Sigmoid colon (tissue), 7 donors: ENCODE measurements at regions of chr20 and their contacts with region 1.

Region 1: DNA sequence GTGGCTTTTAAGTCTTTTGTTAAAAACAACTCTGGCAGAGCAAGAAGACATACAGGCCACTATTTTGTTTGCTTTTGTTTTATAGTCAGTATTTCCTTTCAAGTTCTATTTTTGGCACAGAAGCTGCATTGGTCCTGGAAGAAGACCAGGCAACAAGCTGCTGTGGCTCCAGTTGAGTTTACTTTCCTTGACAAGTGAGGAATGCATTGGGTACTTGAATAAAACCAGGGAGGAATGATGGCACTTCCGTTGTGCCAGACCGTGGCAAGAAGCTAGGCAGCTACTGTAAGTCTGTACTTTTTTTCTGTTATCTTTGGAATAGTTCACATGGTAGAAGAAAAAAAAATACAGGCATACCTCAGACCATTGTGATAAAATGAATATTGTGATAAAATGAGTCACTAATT is 66.3 kb downstream of the NCOA3 start:
- DNase-seq: peak; percentile 72
- H3K4me3 ChIP-seq: no peak overlapping the region
- H3K27ac ChIP-seq: peak overlapping the region; percentile 57 to 82 (median 76)
- H3K4me1 ChIP-seq: peaks cover 0 to 46% (median 35%) of the 10 kb centered on the region in 4 donors
- H3K27me3 ChIP-seq: no peaks in the 10 kb centered on the region
- CTCF ChIP-seq: no peak
- EP300 ChIP-seq: peak in 2 of 4 donors; percentile 60 to 75
- POLR2A ChIP-seq: no peak

Region 2: DNA sequence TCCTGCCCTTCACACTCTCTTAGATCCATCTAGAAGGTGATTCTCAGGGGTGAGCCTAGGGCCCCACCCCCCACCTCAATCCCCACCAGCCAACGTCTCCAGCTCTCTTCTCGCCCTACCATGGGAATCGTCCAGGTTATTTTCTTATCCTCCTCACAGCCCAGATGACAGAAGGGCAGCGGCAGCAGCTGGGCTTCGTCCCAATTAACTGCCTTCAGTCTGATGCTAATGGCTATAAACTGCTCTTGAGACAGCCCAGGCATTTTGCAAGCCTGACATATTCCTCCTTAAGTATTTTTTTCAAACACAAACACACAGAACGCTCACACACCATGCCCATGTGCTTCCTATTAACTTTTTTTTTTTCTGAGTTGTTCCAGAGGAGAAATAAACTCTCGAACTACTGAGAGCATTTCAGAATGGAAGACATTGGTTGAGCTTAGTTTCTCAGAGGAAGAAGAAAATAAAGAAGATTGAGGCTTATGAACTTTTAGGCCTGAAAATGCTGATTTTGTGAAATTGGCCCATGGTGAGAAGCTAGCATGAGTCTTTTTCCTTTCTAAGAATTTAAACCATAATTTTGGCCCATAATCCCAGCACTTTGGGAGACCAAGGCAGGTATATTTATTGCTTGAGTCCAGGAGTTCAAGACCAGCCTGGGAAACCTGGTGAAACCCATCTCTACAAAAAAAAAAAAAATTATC is 548.7 kb before region 1 on chr20:
- intact Hi-C with region 1: loop called (anchors 5 kb)
- DNase-seq: peak; percentile 87
- H3K4me3 ChIP-seq: no peak overlapping the region
- H3K27ac ChIP-seq: peak overlapping the region in 2 of 4 donors; percentile 43 to 59
- H3K4me1 ChIP-seq: peaks cover 0 to 34% (median 26%) of the 10 kb centered on the region in 4 donors
- H3K27me3 ChIP-seq: no peaks in the 10 kb centered on the region
- CTCF ChIP-seq: no peak
- EP300 ChIP-seq: peak in 3 of 4 donors; percentile 33 to 74 (median 60)
- POLR2A ChIP-seq: no peak

Region 3: DNA sequence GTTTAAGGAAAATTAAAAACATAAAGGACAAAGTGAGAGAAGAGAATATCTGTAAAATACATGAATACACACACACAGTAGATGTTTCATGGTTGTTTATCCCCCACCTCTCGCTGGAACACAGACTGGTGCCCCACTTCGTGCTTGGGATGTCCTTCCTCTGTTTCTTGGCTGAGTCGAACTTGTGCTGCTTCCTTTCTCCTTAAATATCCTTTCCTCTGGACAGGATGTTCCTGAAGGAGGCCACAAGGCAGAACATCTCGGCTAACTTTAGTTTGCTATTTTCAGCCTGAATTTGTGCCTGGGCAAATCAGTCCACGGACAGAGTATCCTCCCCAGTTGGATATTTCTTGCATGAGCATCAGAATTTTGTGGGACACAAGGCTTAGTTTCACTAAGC is 156.8 kb before region 1 on chr20:
- intact Hi-C with region 1: no loop called
- DNase-seq: no peak
- H3K4me3 ChIP-seq: no peak overlapping the region
- H3K27ac ChIP-seq: peak overlapping the region in 3 of 4 donors; percentile 14 to 66 (median 39)
- H3K4me1 ChIP-seq: no peaks in the 10 kb centered on the region
- H3K27me3 ChIP-seq: no peaks in the 10 kb centered on the region
- CTCF ChIP-seq: no peak
- EP300 ChIP-seq: no peak
- POLR2A ChIP-seq: no peak